ENCODE measurements at regions of chr17 and their contacts with region 1.

Region 1: DNA sequence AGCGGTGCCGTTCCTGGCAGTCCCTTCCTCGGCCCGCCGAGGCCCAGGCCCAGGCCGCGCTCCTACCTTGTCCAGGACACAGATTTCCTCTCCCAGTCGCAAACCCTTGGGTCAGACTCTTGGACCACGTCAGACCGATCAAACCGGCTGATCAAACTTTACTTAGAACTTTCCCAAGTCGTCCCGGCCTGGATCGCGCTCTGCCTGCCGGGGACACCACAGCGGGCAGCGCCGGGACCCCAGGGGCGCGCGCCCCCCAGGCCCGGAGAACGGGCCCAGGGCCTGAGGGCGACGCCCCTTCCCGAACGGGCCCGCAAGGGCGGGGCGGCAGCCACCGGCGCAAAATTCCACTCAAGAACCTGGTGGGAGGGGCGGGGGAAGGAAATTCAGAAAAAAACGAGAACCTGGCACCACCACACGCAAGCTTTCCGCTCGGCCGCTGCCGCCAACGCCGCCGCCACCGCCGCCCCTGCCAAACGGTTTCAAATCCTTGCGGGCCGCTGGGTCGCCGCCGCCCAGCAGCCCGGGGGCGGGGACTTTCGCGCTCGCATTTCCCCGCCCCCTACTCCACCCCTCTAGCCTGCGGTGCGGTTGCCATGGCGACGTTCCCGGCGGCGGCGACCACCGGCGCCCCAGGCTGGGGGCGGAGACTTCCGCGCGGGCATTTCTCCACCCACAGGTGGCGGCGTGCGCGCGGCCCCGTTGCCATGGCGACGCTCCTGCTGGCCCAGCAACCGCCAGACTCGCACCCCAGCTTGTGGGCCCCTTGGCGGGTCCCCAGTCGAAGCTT is at the start of gene CEP112:
- DNase-seq: peak; percentile 71 to 88 (median 77)
- ATAC-seq: peak; percentile 95
- H3K4me3 ChIP-seq: peak within 1 kb of the TSS; percentile 67
- H3K4me3 Mint-ChIP-seq: peak within 1 kb of the TSS; percentile 78 to 89 (median 84)
- H3K27ac ChIP-seq: peak within 1 kb of the TSS; percentile 69
- H3K27ac Mint-ChIP-seq: peak within 1 kb of the TSS; percentile 80 to 97 (median 87)
- H3K4me1 ChIP-seq: peaks cover 5 to 12% of the 10 kb centered on the region in 2 donors
- H3K4me1 Mint-ChIP-seq: peaks cover 6 to 18% (median 16%) of the 10 kb centered on the region in 7 donors
- H3K27me3 ChIP-seq: no peaks in the 10 kb centered on the region
- H3K27me3 Mint-ChIP-seq: peaks cover 0 to 10% (median 0%) of the 10 kb centered on the region in 5 donors
- total RNA-seq, gene CEP112: 0.46 to 2.5 (median 0.76) TPM

Region 2: GRCh38 chr17:65841089-65841488 is 350.7 kb before region 1 on chr17:
- CTCF ChIA-PET with region 1: no interaction called
- POLR2A ChIA-PET with region 1: no interaction called
- intact Hi-C with region 1: no loop called
- DNase-seq: no peak
- ATAC-seq: no peak
- H3K4me3 ChIP-seq: no peak overlapping the region
- H3K4me3 Mint-ChIP-seq: no peak overlapping the region
- H3K27ac ChIP-seq: no peak overlapping the region
- H3K27ac Mint-ChIP-seq: no peak overlapping the region
- H3K4me1 ChIP-seq: no peaks in the 10 kb centered on the region
- H3K4me1 Mint-ChIP-seq: peaks cover 0 to 1% (median 0%) of the 10 kb centered on the region in 7 donors
- H3K27me3 ChIP-seq: no peaks in the 10 kb centered on the region
- H3K27me3 Mint-ChIP-seq: peaks cover 0 to 12% (median 0%) of the 10 kb centered on the region in 5 donors

Region 3: DNA sequence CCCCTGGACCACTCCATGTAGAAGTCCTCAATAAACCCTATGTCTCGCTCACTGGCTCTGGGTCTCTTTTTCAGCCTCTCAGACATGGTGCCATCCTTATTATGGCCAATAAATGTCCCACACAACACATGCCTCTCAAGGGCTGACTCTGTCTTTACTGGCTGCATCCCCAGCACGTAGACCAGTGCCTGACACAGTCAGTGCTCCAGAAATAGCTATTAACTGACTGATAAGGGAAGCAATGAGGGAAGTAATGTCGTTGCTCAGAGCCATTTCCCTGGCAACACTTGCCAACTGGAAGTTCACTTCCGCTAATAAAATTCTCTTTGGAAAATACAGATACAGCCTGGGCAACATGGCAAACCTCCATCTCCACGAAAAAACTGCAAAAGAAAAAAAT is 56.5 kb after region 1 on chr17:
- CTCF ChIA-PET with region 1: no interaction called
- POLR2A ChIA-PET with region 1: no interaction called
- intact Hi-C with region 1: loop called in 1 of 2 experiments (anchors 2 kb)
- DNase-seq: no peak
- ATAC-seq: no peak
- H3K4me3 ChIP-seq: no peak overlapping the region
- H3K4me3 Mint-ChIP-seq: peak overlapping the region in 3 of 10 donors; percentile 17 to 42 (median 25)
- H3K27ac ChIP-seq: no peak overlapping the region
- H3K27ac Mint-ChIP-seq: peak overlapping the region in 3 of 9 donors; percentile 54 to 89 (median 68)
- H3K4me1 ChIP-seq: peaks cover 8 to 27% of the 10 kb centered on the region in 2 donors
- H3K4me1 Mint-ChIP-seq: peaks cover 2 to 58% (median 41%) of the 10 kb centered on the region in 7 donors
- H3K27me3 ChIP-seq: no peaks in the 10 kb centered on the region
- H3K27me3 Mint-ChIP-seq: peaks cover 0 to 2% (median 0%) of the 10 kb centered on the region in 5 donors